ENCODE measurements at regions of chr7 and their contacts with region 1.

Region 1: GRCh38 chr7:140517546-140518369 is 38.5 kb upstream of the MKRN1 start:
- DNase-seq: peak; percentile 86 to 89
- H3K4me3 ChIP-seq: no peak overlapping the region
- H3K27ac ChIP-seq: peak overlapping the region in 1 of 3 donors; percentile 15
- H3K4me1 ChIP-seq: peaks cover 0 to 3% of the 10 kb centered on the region in 2 donors
- H3K27me3 ChIP-seq: no peaks in the 10 kb centered on the region
- CTCF ChIP-seq: peak; percentile 47 to 85 (median 75)
- POLR2A ChIP-seq: no peak

Region 2: DNA sequence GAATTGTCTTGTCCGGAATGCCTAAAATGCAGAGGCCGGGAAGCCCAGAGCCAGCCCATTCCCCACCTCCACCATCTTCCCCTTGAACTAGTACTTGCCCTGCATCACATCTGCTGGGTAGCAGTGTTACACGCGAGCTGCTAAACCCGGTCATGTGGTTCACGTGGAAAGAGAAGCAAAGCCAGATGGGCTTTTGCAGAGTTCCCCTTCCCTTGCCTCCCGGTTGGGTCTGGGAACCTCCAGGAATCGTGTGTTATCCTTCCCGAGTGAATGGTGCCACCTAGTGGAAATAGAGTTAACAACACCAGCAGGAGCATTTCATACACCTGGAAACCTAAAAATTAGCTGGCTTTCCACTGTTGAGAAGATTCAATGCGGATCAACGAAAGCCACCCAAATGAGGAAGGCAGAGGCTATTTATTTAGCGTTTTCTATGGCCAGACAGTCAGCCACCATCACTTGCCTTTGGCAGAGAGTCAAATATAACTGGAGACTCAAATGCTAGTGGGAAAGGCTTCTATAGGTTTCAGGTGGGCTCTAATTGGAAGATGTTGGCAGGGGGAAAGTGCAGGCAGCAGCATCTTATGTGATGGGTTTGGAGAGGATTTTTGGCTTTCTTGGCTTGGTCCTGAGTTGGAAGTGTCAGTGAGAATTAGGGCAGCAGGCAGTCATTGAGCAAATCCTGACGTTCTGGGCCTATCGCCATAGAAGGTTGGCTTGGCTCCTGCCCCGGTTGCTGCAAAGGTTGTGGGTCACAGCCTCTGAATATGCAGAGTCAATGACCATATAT is 135.8 kb after region 1 on chr7:
- intact Hi-C with region 1: loop called (anchors 2 kb)
- DNase-seq: peak; percentile 46 to 54
- H3K4me3 ChIP-seq: no peak overlapping the region
- H3K27ac ChIP-seq: no peak overlapping the region
- H3K4me1 ChIP-seq: peaks cover 12 to 15% of the 10 kb centered on the region in 2 donors
- H3K27me3 ChIP-seq: no peaks in the 10 kb centered on the region
- CTCF ChIP-seq: peak; percentile 75 to 91 (median 84)
- POLR2A ChIP-seq: no peak